ENCODE measurements at regions of chr12 and their contacts with region 1.

Region 1: DNA sequence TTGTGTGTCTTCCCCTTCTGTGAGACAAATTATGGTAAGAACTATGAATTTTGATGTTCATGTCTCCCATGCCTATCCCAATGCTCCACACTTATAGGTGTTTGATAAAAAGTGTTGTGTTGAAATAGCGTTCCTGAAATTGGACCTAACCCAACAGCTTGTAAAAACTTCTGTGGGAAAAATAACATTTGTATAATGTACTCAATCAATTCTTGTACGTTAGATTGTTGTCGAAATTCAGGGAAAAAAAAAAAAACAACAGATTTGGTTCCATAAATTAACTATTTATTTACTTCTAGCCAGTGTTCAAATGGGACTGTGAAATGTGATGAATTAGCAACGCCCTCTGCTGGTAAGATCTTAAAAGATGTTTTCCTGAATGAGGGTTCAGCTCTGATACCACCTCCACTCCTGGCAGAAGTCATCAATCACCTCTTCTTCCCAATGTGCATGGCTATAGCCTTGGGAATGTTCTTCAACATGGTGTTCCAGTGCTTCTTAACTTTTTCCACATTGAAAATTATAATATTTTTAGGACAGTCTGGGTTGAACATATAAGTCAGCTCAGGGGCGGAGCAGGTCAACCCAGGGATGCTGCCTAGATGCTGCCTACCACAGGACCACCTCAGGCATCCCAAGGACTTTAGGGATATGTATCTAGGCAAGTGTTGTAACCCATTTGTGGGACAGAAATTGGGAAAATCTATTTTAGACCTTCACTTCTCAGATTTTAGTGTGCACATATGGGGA is 170.6 kb downstream of the OTOGL start:
- DNase-seq: peak; percentile 24
- ATAC-seq: peak; percentile 73; the same call in 1 of the 2 replicates
- H3K4me3 ChIP-seq: no peak overlapping the region
- H3K27ac ChIP-seq: no peak overlapping the region
- H3K4me1 ChIP-seq: 0 out of 2 replicates have a peak, but pooled peaks cover 2% of the 10 kb centered on the region
- H3K27me3 ChIP-seq: no peaks in the 10 kb centered on the region
- CTCF ChIP-seq: peak; percentile 76

Region 2: DNA sequence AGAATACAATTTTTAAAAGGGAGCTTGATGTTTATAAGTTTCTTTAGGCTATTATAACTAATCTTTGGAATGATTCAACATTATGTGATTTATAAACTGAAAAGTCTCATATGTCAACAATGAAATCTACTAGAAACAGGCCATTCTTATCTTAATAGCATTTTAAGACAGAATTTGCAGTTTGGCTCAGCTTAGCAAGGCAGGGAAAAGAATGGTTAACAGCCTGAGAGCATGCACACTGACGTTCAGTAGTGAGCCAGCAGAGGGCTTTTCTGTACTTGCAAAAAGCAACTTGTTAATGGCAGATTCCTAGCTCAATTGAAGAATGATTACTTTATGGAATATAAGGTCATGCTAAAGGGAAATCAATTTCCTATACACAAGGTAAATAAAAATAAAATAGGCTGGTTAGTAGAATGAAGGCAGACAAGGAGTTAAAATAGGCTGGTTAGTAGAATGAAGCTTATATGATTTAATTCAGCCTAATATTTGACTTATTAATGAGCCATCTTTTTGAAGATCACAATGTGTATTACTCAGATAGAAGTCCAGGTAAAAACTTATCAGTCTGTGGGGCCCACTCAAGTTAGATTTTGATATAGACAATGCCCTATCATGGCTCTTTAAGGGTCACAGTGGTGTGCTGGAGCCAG is 74.8 kb before region 1 on chr12:
- CTCF ChIA-PET with region 1: interaction called, 13 read pairs
- POLR2A ChIA-PET with region 1: no interaction called
- in situ Hi-C with region 1: no loop called
- intact Hi-C with region 1: loop called (anchors 1 kb)
- DNase-seq: peak; percentile 20
- ATAC-seq: peak; percentile 87
- H3K4me3 ChIP-seq: no peak overlapping the region
- H3K27ac ChIP-seq: no peak overlapping the region
- H3K4me1 ChIP-seq: no peaks in the 10 kb centered on the region
- H3K27me3 ChIP-seq: no peaks in the 10 kb centered on the region
- CTCF ChIP-seq: peak; percentile 60; the same call in 1 of the 2 replicates

Measured in Panc1 (cell line).